PC-9 (cell line): ENCODE measurements at regions of chr3 and their contacts with region 1.

Region 1: DNA sequence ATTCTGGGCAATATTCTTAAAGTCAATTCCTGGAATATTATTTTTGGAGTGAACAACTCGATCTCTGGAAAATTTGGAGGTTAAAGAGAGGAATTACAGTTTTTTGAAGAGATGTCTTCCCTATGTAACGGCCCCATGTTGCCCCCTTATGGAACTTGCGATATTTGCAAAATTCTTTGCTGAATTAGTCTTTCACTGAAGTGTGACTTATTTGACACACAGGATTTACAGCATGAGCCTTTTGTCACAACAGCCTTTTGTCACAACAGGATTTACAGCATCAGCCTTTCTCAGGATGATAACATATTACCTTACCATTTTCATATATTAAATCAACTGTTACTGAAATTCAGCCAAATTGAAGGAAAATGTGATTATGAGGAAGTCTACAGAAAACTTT is 37.8 kb upstream of the SPTSSB start:
- DNase-seq: peak; percentile 37 to 56
- H3K4me3 ChIP-seq: no peak overlapping the region
- H3K27ac ChIP-seq: no peak overlapping the region
- H3K4me1 ChIP-seq: peaks cover 21% of the 10 kb centered on the region
- H3K27me3 ChIP-seq: no peaks in the 10 kb centered on the region
- CTCF ChIP-seq: peak; percentile 74

Region 2: DNA sequence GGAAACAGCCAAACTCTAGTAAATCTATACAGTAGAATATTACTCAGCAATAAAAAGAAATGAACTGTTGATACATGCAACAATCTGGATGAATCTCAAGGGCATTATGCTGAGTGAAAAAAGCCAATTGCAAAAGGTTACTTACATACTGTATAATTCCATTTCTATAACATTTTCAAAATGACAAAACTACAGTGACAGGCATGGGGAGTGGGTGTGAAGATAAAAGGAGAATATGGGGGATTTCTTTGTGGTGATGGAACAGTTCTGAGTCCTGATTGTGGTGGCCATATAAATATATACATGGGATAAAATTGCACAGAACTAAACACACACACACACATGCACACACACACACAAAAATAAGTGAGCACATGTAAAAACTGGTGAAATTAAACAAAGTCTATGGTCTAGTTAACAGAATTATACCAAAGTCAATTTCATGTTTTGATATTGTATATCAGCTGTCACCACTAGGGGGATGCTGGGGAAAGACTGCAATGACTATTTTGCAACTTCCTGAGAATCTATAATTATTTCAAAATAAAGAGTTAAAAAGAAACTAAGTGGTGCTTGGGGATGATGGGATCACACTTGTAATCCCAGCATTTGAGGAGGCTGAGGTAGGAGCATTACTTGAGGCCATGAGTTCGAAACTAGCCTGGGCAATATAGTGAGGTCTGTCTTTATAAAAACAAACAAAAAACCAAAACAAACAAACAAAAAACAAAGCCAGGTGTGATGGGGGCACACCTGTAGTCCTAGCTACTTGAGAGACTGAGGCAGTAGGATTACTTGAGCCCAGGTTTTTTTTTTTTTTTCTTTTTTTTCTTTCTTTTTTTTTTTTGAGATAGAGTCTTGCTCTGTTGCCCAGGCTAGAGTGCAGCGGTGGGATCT is 103.7 kb before region 1 on chr3:
- CTCF ChIA-PET with region 1: no interaction called
- POLR2A ChIA-PET with region 1: no interaction called
- intact Hi-C with region 1: loop called (anchors 1 kb)
- DNase-seq: no peak
- H3K4me3 ChIP-seq: no peak overlapping the region
- H3K27ac ChIP-seq: no peak overlapping the region
- H3K4me1 ChIP-seq: no peaks in the 10 kb centered on the region
- H3K27me3 ChIP-seq: no peaks in the 10 kb centered on the region
- CTCF ChIP-seq: peak; percentile 91

Region 3: GRCh38 chr3:161462138-161462537 is 53.1 kb after region 1 on chr3:
- CTCF ChIA-PET with region 1: no interaction called
- POLR2A ChIA-PET with region 1: no interaction called
- intact Hi-C with region 1: no loop called
- DNase-seq: no peak
- H3K4me3 ChIP-seq: no peak overlapping the region
- H3K27ac ChIP-seq: no peak overlapping the region
- H3K4me1 ChIP-seq: no peaks in the 10 kb centered on the region
- H3K27me3 ChIP-seq: no peaks in the 10 kb centered on the region
- CTCF ChIP-seq: no peak